CD8-positive, alpha-beta memory T cell (primary cell): ENCODE measurements at regions of chr13 and their contacts with region 1.

Region 1: GRCh38 chr13:19782049-19782726 is 557 bp downstream of the PSPC1 start:
- DNase-seq: peak in 4 of 5 donors; percentile 38 to 70 (median 48)
- H3K4me3 ChIP-seq: peak overlapping the region; percentile 97
- H3K4me3 Mint-ChIP-seq: peak overlapping the region; percentile 98 to 100 (median 99)
- H3K27ac ChIP-seq: peak overlapping the region; percentile 96
- H3K27ac Mint-ChIP-seq: peak overlapping the region; percentile 97 to 99 (median 99)
- H3K4me1 ChIP-seq: peaks cover 5% of the 10 kb centered on the region
- H3K4me1 Mint-ChIP-seq: peaks cover 7 to 13% (median 9%) of the 10 kb centered on the region in 3 donors
- H3K27me3 ChIP-seq: no peaks in the 10 kb centered on the region
- H3K27me3 Mint-ChIP-seq: peaks cover 0 to 6% of the 10 kb centered on the region in 2 donors

Region 2: DNA sequence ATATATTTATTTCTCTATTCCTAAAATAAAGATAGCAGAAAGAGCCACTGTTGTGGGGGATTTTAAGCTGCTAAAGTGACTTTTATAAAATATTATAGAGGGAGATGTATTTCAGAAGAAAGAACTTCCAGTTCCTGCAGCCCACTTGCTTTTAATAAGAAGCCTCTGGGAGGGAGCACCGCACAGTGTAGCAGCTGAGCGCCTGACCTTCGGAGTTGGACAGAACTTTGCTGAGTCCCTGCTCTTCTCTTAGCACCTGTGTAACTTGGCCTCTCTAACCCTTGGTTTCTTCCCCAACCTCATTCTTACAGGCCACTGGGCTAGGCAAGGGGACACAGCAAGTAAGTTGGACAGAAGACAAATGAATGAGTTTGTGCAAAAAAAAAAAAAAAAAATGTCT is 186.1 kb before region 1 on chr13:
- CTCF ChIA-PET with region 1: no interaction called
- POLR2A ChIA-PET with region 1: no interaction called
- DNase-seq: no peak
- H3K4me3 ChIP-seq: no peak overlapping the region
- H3K4me3 Mint-ChIP-seq: no peak overlapping the region
- H3K27ac ChIP-seq: no peak overlapping the region
- H3K27ac Mint-ChIP-seq: no peak overlapping the region
- H3K4me1 ChIP-seq: no peaks in the 10 kb centered on the region
- H3K4me1 Mint-ChIP-seq: no peaks in the 10 kb centered on the region
- H3K27me3 ChIP-seq: no peaks in the 10 kb centered on the region
- H3K27me3 Mint-ChIP-seq: peaks cover 47 to 48% of the 10 kb centered on the region in 2 donors

Region 3: DNA sequence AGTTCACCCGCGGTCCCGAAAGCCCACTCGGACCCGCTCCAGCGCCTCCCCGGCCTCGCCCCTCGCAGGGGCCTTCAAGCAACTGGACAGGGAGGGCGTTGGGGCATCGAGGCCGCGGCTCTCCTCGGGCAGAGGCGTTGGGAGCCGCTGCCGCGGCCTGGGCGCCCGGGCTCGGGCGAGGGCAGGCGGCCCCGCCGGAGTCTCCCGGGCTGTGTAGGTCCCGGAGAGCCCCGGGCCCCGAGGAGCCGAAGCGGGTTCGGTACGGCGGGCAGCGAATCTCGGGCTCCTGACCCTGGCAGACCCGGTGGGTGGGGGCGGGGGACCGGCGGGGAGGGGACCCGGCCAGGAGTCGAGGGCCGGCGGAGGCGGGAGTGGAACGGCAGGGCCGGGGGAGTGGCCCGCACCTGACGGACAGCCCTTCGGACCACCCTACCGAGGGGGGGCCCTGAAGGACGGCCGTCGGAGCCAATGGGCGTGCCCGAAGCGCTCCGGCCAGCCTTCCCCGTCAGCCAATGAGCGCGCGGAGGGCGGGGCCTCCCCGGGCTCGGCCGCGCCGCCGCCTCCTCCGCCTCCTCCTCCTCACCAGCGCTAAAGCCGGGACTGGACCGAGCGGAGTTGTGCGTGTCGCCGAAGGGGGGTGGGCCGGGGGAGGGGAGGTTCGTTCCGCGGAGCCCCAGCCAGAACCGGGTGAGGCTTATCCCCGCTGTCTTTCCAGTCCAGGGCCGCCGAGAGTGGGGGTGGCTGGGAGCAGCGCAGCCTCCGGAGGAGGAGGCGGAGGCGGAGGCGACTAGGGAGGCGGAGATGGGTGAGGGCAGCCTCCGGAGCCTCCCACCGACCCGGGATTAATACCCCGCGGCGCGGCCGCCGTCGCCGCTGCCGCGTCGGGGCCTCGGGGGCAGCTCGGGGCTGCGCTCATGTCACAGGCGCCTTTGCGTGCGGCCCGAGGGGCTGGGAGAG is 176.2 kb after region 1 on chr13 and contains the start of gene ZMYM2:
- CTCF ChIA-PET with region 1: interaction called, 4 read pairs
- POLR2A ChIA-PET with region 1: interaction called, 11 read pairs
- DNase-seq: peak; percentile 95 to 98 (median 98)
- H3K4me3 ChIP-seq: peak within 1 kb of the TSS; percentile 94
- H3K4me3 Mint-ChIP-seq: peak within 1 kb of the TSS; percentile 88 to 99 (median 97)
- H3K27ac ChIP-seq: peak within 1 kb of the TSS; percentile 87
- H3K27ac Mint-ChIP-seq: peak within 1 kb of the TSS; percentile 91 to 99 (median 96)
- H3K4me1 ChIP-seq: peaks cover 34% of the 10 kb centered on the region
- H3K4me1 Mint-ChIP-seq: peaks cover 28 to 39% (median 36%) of the 10 kb centered on the region in 3 donors
- H3K27me3 ChIP-seq: no peaks in the 10 kb centered on the region
- H3K27me3 Mint-ChIP-seq: peaks cover 0 to 1% of the 10 kb centered on the region in 2 donors
- total RNA-seq, gene ZMYM2: 41.4 to 42.1 TPM

Region 4: DNA sequence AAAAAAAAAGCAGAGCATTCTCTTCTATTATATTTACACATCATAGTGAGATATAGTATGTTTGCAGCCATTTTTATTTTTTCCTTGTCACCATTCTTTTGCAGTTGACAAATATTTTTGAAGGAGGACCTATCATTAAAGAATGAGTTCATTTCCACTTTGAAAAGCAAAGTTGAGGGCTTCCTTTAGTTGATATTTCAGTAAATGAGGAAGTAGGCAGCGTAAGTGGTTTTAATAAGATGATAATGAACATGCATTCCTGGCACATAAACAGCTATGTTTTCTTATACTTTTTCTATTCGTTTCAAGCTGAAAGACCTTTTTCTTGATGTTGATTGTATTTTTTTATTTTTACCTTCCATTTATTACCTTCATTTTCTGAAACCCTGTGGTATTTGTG is 242.5 kb after region 1 on chr13:
- CTCF ChIA-PET with region 1: no interaction called
- POLR2A ChIA-PET with region 1: no interaction called
- DNase-seq: no peak
- H3K4me3 ChIP-seq: no peak overlapping the region
- H3K4me3 Mint-ChIP-seq: no peak overlapping the region
- H3K27ac ChIP-seq: no peak overlapping the region
- H3K27ac Mint-ChIP-seq: peak overlapping the region in 3 of 8 donors; percentile 4 to 32 (median 13)
- H3K4me1 ChIP-seq: no peaks in the 10 kb centered on the region
- H3K4me1 Mint-ChIP-seq: peaks cover 15 to 33% (median 30%) of the 10 kb centered on the region in 3 donors
- H3K27me3 ChIP-seq: no peaks in the 10 kb centered on the region
- H3K27me3 Mint-ChIP-seq: no peaks in the 10 kb centered on the region